Natural killer cell (primary cell): ENCODE measurements at regions of chr11 and their contacts with region 1.

Region 1: GRCh38 chr11:19951558-19952115 is 208.6 kb downstream of the DBX1 start:
- DNase-seq: peak in 1 of 2 donors; percentile 64
- ATAC-seq: peak; percentile 64 to 82 (median 74)
- H3K4me3 ChIP-seq: no peak overlapping the region
- H3K4me3 Mint-ChIP-seq: peak overlapping the region; percentile 61
- H3K27ac ChIP-seq: no peak overlapping the region
- H3K27ac Mint-ChIP-seq: no peak overlapping the region
- H3K4me1 ChIP-seq: no peaks in the 10 kb centered on the region
- H3K4me1 Mint-ChIP-seq: peaks cover 7 to 8% of the 10 kb centered on the region in 2 donors
- H3K27me3 ChIP-seq: no peaks in the 10 kb centered on the region
- H3K27me3 Mint-ChIP-seq: peaks cover 29 to 49% of the 10 kb centered on the region in 2 donors
- CTCF ChIP-seq: peak; percentile 78

Region 2: GRCh38 chr11:20110908-20111669 is 159.5 kb after region 1 on chr11:
- intact Hi-C with region 1: loop called (anchors 1 kb)
- DNase-seq: peak in 1 of 2 donors; percentile 68
- ATAC-seq: peak; percentile 70 to 94 (median 79)
- H3K4me3 ChIP-seq: no peak overlapping the region
- H3K4me3 Mint-ChIP-seq: no peak overlapping the region
- H3K27ac ChIP-seq: no peak overlapping the region
- H3K27ac Mint-ChIP-seq: no peak overlapping the region
- H3K4me1 ChIP-seq: no peaks in the 10 kb centered on the region
- H3K4me1 Mint-ChIP-seq: no peaks in the 10 kb centered on the region
- H3K27me3 ChIP-seq: no peaks in the 10 kb centered on the region
- H3K27me3 Mint-ChIP-seq: peaks cover 0 to 11% of the 10 kb centered on the region in 2 donors
- CTCF ChIP-seq: peak; percentile 89

Region 3: GRCh38 chr11:20355221-20356219 is 403.9 kb after region 1 on chr11:
- intact Hi-C with region 1: loop called (anchors 1 kb)
- DNase-seq: peak in 1 of 2 donors; percentile 71
- ATAC-seq: peak; percentile 52 to 89 (median 86)
- H3K4me3 ChIP-seq: no peak overlapping the region
- H3K4me3 Mint-ChIP-seq: no peak overlapping the region
- H3K27ac ChIP-seq: no peak overlapping the region
- H3K27ac Mint-ChIP-seq: no peak overlapping the region
- H3K4me1 ChIP-seq: peaks cover 2% of the 10 kb centered on the region
- H3K4me1 Mint-ChIP-seq: peaks cover 3 to 6% of the 10 kb centered on the region in 2 donors
- H3K27me3 ChIP-seq: no peaks in the 10 kb centered on the region
- H3K27me3 Mint-ChIP-seq: peaks cover 0 to 18% of the 10 kb centered on the region in 2 donors
- CTCF ChIP-seq: peak; percentile 63